B cell (primary cell): ENCODE measurements at regions of chr20 and their contacts with region 1.

Region 1: GRCh38 chr20:44761423-44761822 is 15.8 kb downstream of the KCNK15 start:
- DNase-seq: no peak
- ATAC-seq: no peak
- H3K4me3 ChIP-seq: no peak overlapping the region
- H3K4me3 Mint-ChIP-seq: no peak overlapping the region
- H3K27ac ChIP-seq: no peak overlapping the region
- H3K27ac Mint-ChIP-seq: no peak overlapping the region
- H3K4me1 ChIP-seq: no peaks in the 10 kb centered on the region
- H3K4me1 Mint-ChIP-seq: no peaks in the 10 kb centered on the region
- H3K27me3 ChIP-seq: peaks cover 0 to 15% (median 3%) of the 10 kb centered on the region in 4 experiments
- H3K27me3 Mint-ChIP-seq: peaks cover 28% of the 10 kb centered on the region
- CTCF ChIP-seq: no peak

Region 2: GRCh38 chr20:44747166-44748004 is 14.0 kb before region 1 on chr20:
- CTCF ChIA-PET with region 1: interaction called, 13 read pairs
- POLR2A ChIA-PET with region 1: no interaction called
- intact Hi-C with region 1: no loop called
- DNase-seq: peak; percentile 66
- ATAC-seq: peak; percentile 44
- H3K4me3 ChIP-seq: no peak overlapping the region
- H3K4me3 Mint-ChIP-seq: peak overlapping the region; percentile 60
- H3K27ac ChIP-seq: no peak overlapping the region
- H3K27ac Mint-ChIP-seq: no peak overlapping the region
- H3K4me1 ChIP-seq: peaks cover 7 to 15% of the 10 kb centered on the region in 2 donors
- H3K4me1 Mint-ChIP-seq: peaks cover 16% of the 10 kb centered on the region
- H3K27me3 ChIP-seq: peaks cover 0 to 42% (median 20%) of the 10 kb centered on the region in 4 experiments
- H3K27me3 Mint-ChIP-seq: peaks cover 34% of the 10 kb centered on the region
- CTCF ChIP-seq: peak; percentile 66